Caco-2 (cell line): ENCODE measurements at regions of chr4 and their contacts with region 1.

Region 1: DNA sequence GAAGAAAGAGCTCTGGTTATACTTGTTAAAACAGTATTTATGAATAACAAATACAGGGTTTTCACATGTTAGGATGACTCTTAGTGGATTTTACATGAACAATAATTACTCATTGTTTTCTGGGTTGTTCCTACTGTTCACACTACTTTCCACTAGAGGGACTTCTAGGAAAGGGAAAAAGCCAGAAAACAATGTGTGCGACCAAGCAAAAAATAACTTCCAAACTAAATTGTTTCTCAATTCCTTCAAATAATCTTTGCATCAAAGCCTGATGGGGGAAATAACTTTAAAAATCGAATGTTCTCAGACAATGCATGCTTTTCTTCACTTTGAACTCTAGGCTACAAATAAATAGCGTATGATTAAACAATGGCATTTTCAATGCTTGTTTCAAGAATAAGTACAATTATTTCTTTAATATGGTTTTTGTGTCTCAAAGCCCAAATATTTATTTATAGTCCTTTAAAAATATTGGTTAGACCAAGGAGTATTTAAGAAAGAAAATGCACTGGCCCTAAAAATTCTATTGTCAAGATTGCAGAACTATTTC is 72.1 kb upstream of the ETNPPL start:
- DNase-seq: no peak
- H3K4me3 ChIP-seq: no peak overlapping the region
- H3K4me3 Mint-ChIP-seq: no peak overlapping the region
- H3K27ac Mint-ChIP-seq: no peak overlapping the region
- H3K4me1 ChIP-seq: no peaks in the 10 kb centered on the region
- H3K4me1 Mint-ChIP-seq: no peaks in the 10 kb centered on the region
- H3K27me3 ChIP-seq: no peaks in the 10 kb centered on the region
- H3K27me3 Mint-ChIP-seq: peaks cover 12% of the 10 kb centered on the region
- CTCF ChIP-seq: peak; percentile 46 to 66

Region 2: DNA sequence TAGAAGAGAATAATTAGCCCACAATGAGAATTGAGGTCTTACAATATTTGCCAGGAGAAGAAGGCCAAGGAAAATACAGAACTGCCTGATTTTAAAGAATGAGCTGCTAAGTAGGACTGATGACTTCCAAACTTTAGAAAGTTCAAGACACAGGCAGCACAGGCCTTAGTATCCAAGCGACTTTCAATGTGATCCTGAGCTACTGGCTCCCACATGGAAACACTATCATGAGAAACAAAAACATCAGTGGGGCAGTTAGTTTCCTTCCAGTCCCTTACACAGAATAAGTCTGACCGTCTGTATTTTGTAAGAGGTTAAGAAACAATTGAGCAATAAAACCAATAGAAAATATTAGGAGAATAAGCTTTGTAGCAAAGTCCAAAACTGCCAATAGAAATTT is 216.1 kb after region 1 on chr4:
- CTCF ChIA-PET with region 1: interaction called, 11 read pairs
- POLR2A ChIA-PET with region 1: no interaction called
- intact Hi-C with region 1: no loop called
- DNase-seq: no peak
- H3K4me3 ChIP-seq: no peak overlapping the region
- H3K4me3 Mint-ChIP-seq: no peak overlapping the region
- H3K27ac Mint-ChIP-seq: no peak overlapping the region
- H3K4me1 ChIP-seq: no peaks in the 10 kb centered on the region
- H3K4me1 Mint-ChIP-seq: no peaks in the 10 kb centered on the region
- H3K27me3 ChIP-seq: no peaks in the 10 kb centered on the region
- H3K27me3 Mint-ChIP-seq: peaks cover 16% of the 10 kb centered on the region
- CTCF ChIP-seq: no peak

Region 3: GRCh38 chr4:109298279-109299010 is 463.5 kb after region 1 on chr4:
- CTCF ChIA-PET with region 1: no interaction called
- POLR2A ChIA-PET with region 1: no interaction called
- intact Hi-C with region 1: loop called (anchors 1 kb)
- DNase-seq: peak in 1 of 2 experiments; percentile 21
- H3K4me3 ChIP-seq: no peak overlapping the region
- H3K4me3 Mint-ChIP-seq: no peak overlapping the region
- H3K27ac Mint-ChIP-seq: no peak overlapping the region
- H3K4me1 ChIP-seq: no peaks in the 10 kb centered on the region
- H3K4me1 Mint-ChIP-seq: no peaks in the 10 kb centered on the region
- H3K27me3 ChIP-seq: no peaks in the 10 kb centered on the region
- H3K27me3 Mint-ChIP-seq: peaks cover 7% of the 10 kb centered on the region
- CTCF ChIP-seq: peak; percentile 55 to 66

Region 4: GRCh38 chr4:109406338-109406931 is 571.5 kb after region 1 on chr4:
- CTCF ChIA-PET with region 1: no interaction called
- POLR2A ChIA-PET with region 1: no interaction called
- intact Hi-C with region 1: loop called (anchors 1 kb)
- DNase-seq: peak in 1 of 2 experiments; percentile 45
- H3K4me3 ChIP-seq: no peak overlapping the region
- H3K4me3 Mint-ChIP-seq: no peak overlapping the region
- H3K27ac Mint-ChIP-seq: no peak overlapping the region
- H3K4me1 ChIP-seq: no peaks in the 10 kb centered on the region
- H3K4me1 Mint-ChIP-seq: no peaks in the 10 kb centered on the region
- H3K27me3 ChIP-seq: no peaks in the 10 kb centered on the region
- H3K27me3 Mint-ChIP-seq: peaks cover 14% of the 10 kb centered on the region
- CTCF ChIP-seq: peak; percentile 54 to 65